Heart right ventricle (tissue), 16 donors: ENCODE measurements at regions of chr5 and their contacts with region 1.

Region 1: DNA sequence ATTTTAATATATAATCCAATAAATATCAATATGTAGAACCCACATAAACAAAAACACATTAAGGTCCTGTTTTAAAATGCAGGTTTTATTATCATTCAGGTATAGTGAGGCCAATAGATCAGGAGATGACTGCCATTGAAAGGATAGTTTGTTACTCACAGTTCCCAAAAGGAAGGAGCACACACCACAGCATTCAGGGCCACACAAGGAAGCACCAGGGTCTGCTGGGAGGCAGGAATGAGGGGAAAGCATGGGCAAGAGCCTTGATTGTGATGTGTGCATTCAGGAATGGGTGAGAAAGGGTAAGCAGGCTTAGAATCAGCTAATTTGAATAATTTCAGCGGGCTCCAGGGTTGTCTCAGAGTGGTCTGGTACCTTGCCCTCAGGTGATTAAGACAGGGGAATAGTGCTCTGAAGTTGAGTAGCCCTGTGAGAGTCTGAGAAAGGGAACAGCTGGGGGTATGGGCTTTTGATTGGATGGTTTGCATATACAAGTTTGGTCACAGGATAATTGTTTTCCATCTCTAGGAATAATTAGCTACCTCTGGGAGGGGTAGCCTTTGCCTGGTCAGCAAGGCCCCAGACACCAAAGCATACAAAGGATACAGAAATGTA is 19.8 kb upstream of the OTULIN start:
- DNase-seq: no peak
- ATAC-seq: no peak
- H3K4me3 ChIP-seq: no peak overlapping the region
- H3K27ac ChIP-seq: no peak overlapping the region
- H3K4me1 ChIP-seq: peaks cover 0 to 5% (median 0%) of the 10 kb centered on the region in 9 donors
- H3K27me3 ChIP-seq: peaks cover 0 to 25% (median 6%) of the 10 kb centered on the region in 7 donors
- CTCF ChIP-seq: no peak

Region 2: GRCh38 chr5:13994621-13995253 is 650.0 kb before region 1 on chr5:
- intact Hi-C with region 1: loop called in 8 of 10 experiments (anchors 2 to 10 kb)
- DNase-seq: no peak
- ATAC-seq: no peak
- H3K4me3 ChIP-seq: no peak overlapping the region
- H3K27ac ChIP-seq: no peak overlapping the region
- H3K4me1 ChIP-seq: no peaks in the 10 kb centered on the region
- H3K27me3 ChIP-seq: peaks cover 0 to 3% (median 0%) of the 10 kb centered on the region in 7 donors
- CTCF ChIP-seq: no peak

Region 3: GRCh38 chr5:14357851-14358250 is 286.9 kb before region 1 on chr5:
- intact Hi-C with region 1: loop called in 5 of 10 experiments (anchors 2 to 10 kb)
- DNase-seq: no peak
- ATAC-seq: peak in 5 of 8 donors; percentile 10 to 58 (median 22)
- H3K4me3 ChIP-seq: peak overlapping the region in 1 of 10 donors; percentile 9
- H3K27ac ChIP-seq: peak overlapping the region in 2 of 10 donors; percentile 16 to 53
- H3K4me1 ChIP-seq: peaks cover 10 to 53% (median 22%) of the 10 kb centered on the region in 9 donors
- H3K27me3 ChIP-seq: no peaks in the 10 kb centered on the region
- CTCF ChIP-seq: no peak

Region 4: GRCh38 chr5:14399054-14399692 is 245.6 kb before region 1 on chr5:
- intact Hi-C with region 1: loop called in 7 of 10 experiments (anchors 1 to 10 kb)
- DNase-seq: no peak
- ATAC-seq: peak in 3 of 8 donors; percentile 34 to 58 (median 53)
- H3K4me3 ChIP-seq: no peak overlapping the region
- H3K27ac ChIP-seq: peak overlapping the region in 2 of 10 donors; percentile 40 to 48
- H3K4me1 ChIP-seq: peaks cover 0 to 30% (median 14%) of the 10 kb centered on the region in 9 donors
- H3K27me3 ChIP-seq: no peaks in the 10 kb centered on the region
- CTCF ChIP-seq: peak; percentile 48 to 84 (median 75)

Region 5: DNA sequence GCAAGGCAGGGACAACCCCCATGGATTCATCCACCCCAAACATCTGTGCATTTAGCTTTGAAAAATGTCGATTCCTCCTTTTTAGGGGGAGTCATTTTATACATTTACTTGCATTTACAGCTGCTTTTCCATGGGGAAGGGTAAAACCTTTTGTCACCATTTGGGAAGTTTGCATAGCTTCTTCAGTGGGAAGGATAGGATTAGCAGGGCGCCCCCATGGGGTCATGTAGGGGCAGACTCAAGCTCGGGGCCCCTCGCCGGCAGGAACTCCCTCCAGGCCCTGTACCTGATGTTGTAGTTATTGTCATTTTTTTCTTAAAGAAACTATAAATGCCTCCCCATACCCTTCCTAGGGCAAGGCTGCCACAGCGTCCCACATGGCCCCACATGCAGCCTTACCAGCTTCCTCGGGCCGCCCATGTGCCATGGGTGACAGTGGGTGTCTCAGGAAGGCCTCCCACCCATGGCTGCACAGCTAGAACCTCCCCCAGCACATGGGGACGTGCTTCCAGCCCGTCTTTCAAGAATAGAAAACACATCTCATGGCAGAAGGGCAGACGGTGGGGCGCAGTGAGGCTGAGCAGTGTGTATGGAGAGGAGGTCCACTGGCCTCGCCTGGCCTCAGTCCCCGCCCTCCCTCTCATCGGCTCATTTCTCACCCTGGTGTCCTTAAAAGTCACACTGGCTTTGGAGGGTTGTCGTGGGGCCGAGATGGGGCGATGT is 139.3 kb before region 1 on chr5:
- intact Hi-C with region 1: loop called in 1 of 10 experiments (anchors 10 kb)
- DNase-seq: no peak
- ATAC-seq: no peak
- H3K4me3 ChIP-seq: no peak overlapping the region
- H3K27ac ChIP-seq: peak overlapping the region in 1 of 10 donors; percentile 19
- H3K4me1 ChIP-seq: peaks cover 0 to 8% (median 0%) of the 10 kb centered on the region in 9 donors
- H3K27me3 ChIP-seq: no peaks in the 10 kb centered on the region
- CTCF ChIP-seq: peak in 3 of 9 donors; percentile 9 to 13 (median 12)

Region 6: DNA sequence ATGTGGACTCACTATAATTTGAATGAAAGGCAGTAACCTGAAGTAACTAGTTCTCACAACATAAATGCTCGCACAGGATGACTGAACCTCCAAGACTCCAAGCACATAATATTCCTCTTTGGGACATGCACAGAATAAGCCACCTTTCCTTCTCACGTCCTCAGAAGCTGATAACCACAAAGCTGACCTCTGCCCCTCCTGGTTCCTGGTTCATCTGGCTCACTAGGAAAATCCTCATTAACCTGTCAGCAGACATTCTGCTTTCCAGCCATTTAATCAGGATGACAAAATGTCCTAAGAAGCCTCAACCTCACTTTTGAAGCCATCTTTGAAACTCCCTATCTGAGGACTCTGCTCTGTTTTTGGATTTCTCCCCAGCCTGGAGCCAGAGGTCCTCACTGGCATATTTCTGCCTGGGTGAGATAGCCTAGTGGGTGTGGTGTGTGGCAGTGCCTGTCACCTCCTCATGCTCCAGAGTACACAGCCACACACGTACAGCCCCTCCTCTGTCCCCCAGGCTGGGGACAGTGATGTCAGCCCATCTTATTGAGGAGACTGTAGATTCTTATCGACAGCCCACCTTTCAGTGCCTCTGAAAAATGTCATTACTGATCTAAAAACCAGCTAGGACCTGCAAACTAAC is 216.5 kb after region 1 on chr5:
- intact Hi-C with region 1: no loop called
- DNase-seq: no peak
- ATAC-seq: peak in 7 of 8 donors; percentile 60 to 85 (median 70)
- H3K4me3 ChIP-seq: no peak overlapping the region
- H3K27ac ChIP-seq: peak overlapping the region in 7 of 10 donors; percentile 15 to 69 (median 67)
- H3K4me1 ChIP-seq: peaks cover 0 to 77% (median 47%) of the 10 kb centered on the region in 9 donors
- H3K27me3 ChIP-seq: no peaks in the 10 kb centered on the region
- CTCF ChIP-seq: no peak